Caco-2 (cell line): ENCODE measurements at regions of chr3 and their contacts with region 1.

Region 1: GRCh38 chr3:14289590-14290461 is 111.2 kb downstream of the LSM3 start:
- DNase-seq: peak; percentile 50 to 52
- H3K4me3 ChIP-seq: no peak overlapping the region
- H3K4me3 Mint-ChIP-seq: peak overlapping the region; percentile 64
- H3K27ac Mint-ChIP-seq: peak overlapping the region; percentile 95
- H3K4me1 ChIP-seq: peaks cover 50% of the 10 kb centered on the region
- H3K4me1 Mint-ChIP-seq: peaks cover 32% of the 10 kb centered on the region
- H3K27me3 ChIP-seq: no peaks in the 10 kb centered on the region
- H3K27me3 Mint-ChIP-seq: no peaks in the 10 kb centered on the region
- CTCF ChIP-seq: no peak

Region 2: DNA sequence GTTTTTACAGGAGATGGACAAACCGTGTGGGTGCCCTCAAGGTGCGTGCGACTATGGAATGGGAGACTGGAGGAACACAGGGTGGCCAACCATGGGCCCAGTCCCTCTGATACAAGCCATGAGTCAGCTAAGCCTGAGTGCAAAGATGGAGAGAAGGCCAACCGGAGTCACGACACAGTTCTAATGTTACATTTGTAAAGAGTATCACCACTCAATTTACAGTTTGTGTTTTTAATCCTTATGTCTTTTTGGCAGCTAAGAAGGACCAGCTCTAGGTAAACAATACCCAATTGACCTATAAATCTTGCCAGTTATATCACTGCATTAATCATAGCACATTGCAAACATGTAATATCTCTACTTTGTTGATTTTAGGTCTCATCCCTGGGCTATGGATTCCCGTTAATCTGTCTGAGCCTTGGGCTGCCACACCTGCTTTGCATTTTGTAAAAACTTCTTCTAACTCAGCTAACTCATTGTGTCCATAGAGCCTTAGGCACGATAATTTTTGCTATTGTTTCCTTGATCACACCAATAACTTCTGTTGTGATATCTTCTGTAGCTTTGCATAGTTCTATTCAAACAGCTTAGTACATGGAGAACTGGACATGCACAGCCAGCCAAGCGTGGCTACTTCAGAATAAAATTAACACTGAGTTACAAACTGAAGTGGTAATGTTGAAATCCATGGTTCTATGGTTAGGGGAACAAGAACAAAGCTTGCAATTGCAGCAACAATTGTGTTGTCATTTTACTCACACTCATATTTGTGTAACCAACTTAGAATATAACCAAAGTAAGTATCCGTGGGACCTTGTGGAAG is 61.0 kb before region 1 on chr3:
- CTCF ChIA-PET with region 1: no interaction called
- POLR2A ChIA-PET with region 1: no interaction called
- intact Hi-C with region 1: loop called (anchors 1 kb)
- DNase-seq: no peak
- H3K4me3 ChIP-seq: no peak overlapping the region
- H3K4me3 Mint-ChIP-seq: peak overlapping the region; percentile 81
- H3K27ac Mint-ChIP-seq: peak overlapping the region; percentile 96
- H3K4me1 ChIP-seq: peaks cover 83% of the 10 kb centered on the region
- H3K4me1 Mint-ChIP-seq: peaks cover 80% of the 10 kb centered on the region
- H3K27me3 ChIP-seq: no peaks in the 10 kb centered on the region
- H3K27me3 Mint-ChIP-seq: no peaks in the 10 kb centered on the region
- CTCF ChIP-seq: no peak

Region 3: DNA sequence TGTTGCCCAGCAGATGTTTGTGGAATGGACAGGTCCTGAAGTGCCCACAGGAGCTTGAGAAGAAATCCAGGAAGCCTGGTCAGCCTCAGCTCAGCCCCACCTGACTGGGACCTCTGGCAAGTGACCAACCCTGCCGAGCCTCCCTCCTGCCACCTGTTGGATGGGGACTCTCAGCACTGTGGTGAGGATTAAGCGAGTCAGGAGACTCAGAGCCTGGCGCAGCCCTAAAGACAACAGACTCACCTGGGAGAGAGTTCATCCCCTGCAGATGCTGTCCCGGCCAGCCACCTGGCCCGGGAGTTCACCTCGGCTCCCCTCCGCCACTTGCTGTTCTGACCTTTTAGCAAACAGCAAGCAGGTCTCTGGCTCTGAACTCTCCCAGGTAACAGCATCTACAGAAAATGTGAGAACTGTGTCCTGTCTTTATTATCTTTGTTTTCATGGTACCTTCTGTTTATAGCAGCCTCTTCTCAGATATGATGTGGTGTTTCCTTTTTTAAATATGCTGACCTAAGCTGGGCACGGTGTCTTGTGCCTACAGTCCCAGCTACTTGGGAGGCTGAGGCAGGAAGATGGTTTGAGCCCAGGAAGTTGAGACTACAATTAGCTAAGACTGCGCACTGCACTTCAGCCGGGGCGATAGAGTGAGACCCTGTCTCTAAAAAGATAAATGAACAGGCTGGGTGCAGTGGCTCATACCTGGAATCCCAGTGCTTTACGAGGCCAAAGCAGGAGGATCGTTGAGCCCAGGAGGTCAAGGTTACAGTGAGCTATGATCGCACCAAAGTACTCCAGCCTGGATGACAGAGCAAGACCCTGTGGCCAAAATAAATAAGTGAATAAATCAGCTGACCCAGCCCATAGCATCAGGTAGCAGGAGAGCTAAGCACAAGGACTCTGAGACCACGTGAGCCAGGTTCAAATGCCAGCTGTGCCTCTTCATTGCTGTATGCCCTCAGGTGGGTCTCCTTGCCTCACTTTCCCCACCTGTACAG is 80.1 kb after region 1 on chr3:
- CTCF ChIA-PET with region 1: no interaction called
- POLR2A ChIA-PET with region 1: no interaction called
- intact Hi-C with region 1: loop called (anchors 2 kb)
- DNase-seq: peak; percentile 75
- H3K4me3 ChIP-seq: no peak overlapping the region
- H3K4me3 Mint-ChIP-seq: no peak overlapping the region
- H3K27ac Mint-ChIP-seq: peak overlapping the region; percentile 26
- H3K4me1 ChIP-seq: peaks cover 44% of the 10 kb centered on the region
- H3K4me1 Mint-ChIP-seq: peaks cover 41% of the 10 kb centered on the region
- H3K27me3 ChIP-seq: no peaks in the 10 kb centered on the region
- H3K27me3 Mint-ChIP-seq: no peaks in the 10 kb centered on the region
- CTCF ChIP-seq: peak in 1 of 2 experiments; percentile 77

Region 4: DNA sequence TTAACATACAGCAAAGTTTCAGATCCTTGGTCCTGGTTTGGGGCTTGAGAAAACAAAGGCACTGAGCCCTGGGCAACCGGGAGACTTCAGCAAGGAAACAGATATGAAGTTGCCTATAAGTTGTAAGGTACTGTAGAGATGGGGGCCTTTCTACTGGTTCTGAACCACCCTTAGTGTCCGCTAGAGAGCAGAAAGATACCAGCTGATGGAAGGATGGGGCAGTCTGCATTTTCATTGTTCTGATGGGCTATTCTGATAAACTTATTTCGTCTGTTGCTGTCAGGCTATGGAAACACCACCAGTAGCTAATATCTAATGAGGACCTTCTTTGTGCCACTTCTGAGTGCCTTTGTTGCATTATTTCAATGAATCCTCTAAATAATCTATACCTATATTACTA is 567.7 kb after region 1 on chr3:
- CTCF ChIA-PET with region 1: no interaction called
- POLR2A ChIA-PET with region 1: no interaction called
- intact Hi-C with region 1: no loop called
- DNase-seq: no peak
- H3K4me3 ChIP-seq: no peak overlapping the region
- H3K4me3 Mint-ChIP-seq: no peak overlapping the region
- H3K27ac Mint-ChIP-seq: no peak overlapping the region
- H3K4me1 ChIP-seq: no peaks in the 10 kb centered on the region
- H3K4me1 Mint-ChIP-seq: no peaks in the 10 kb centered on the region
- H3K27me3 ChIP-seq: no peaks in the 10 kb centered on the region; the same call in none of the 2 replicates
- H3K27me3 Mint-ChIP-seq: peaks cover 13% of the 10 kb centered on the region
- CTCF ChIP-seq: peak in 1 of 2 experiments; percentile 30